Right ventricle myocardium inferior (tissue), 1 donor: ENCODE measurements at regions of chr2 and their contacts with region 1.

Region 1: GRCh38 chr2:36663851-36664695 is 32.4 kb upstream of the VIT start:
- DNase-seq: no peak
- ATAC-seq: peak; percentile 85

Region 2: GRCh38 chr2:36528274-36528673 is 135.8 kb before region 1 on chr2:
- intact Hi-C with region 1: loop called (anchors 10 kb)
- DNase-seq: no peak
- ATAC-seq: no peak